Activated CD4-positive, alpha-beta T cell treated with anti-CD3 and anti-CD28 coated beads, Interleukin-2, amount 10 ng/mL, durations not matched to agents 24 days and 14 days (primary cell): ENCODE measurements at regions of chr16 and their contacts with region 1.

Region 1: GRCh38 chr16:1772736-1773584 is at the starts of genes EME2 and MRPS34:
- DNase-seq: peak; percentile 96
- H3K4me3 Mint-ChIP-seq: peak within 1 kb of the TSS; percentile 93
- H3K27ac Mint-ChIP-seq: peak within 1 kb of the TSS; percentile 95
- H3K4me1 Mint-ChIP-seq: peaks cover 10% of the 10 kb centered on the region
- H3K27me3 Mint-ChIP-seq: no peaks in the 10 kb centered on the region
- total RNA-seq, gene EME2: 28.2 and 30.0 TPM in 2 replicates
- total RNA-seq, gene MRPS34: 201 and 207 TPM in 2 replicates

Region 2: GRCh38 chr16:1474796-1475551 is 298.0 kb before region 1 on chr16 and contains the start of gene CLCN7:
- intact Hi-C with region 1: loop called (anchors 1 kb)
- DNase-seq: peak; percentile 97
- H3K4me3 Mint-ChIP-seq: peak within 1 kb of the TSS; percentile 89
- H3K27ac Mint-ChIP-seq: peak within 1 kb of the TSS; percentile 87
- H3K4me1 Mint-ChIP-seq: peaks cover 9% of the 10 kb centered on the region
- H3K27me3 Mint-ChIP-seq: no peaks in the 10 kb centered on the region
- total RNA-seq, gene CLCN7: 56.5 and 58.0 TPM in 2 replicates

Region 3: GRCh38 chr16:1677802-1678496 is 95.0 kb before region 1 on chr16 and contains the start of gene JPT2:
- intact Hi-C with region 1: loop called (anchors 2 kb)
- DNase-seq: peak; percentile 99
- H3K4me3 Mint-ChIP-seq: peak within 1 kb of the TSS; percentile 95
- H3K27ac Mint-ChIP-seq: peak within 1 kb of the TSS; percentile 93
- H3K4me1 Mint-ChIP-seq: peaks cover 34% of the 10 kb centered on the region
- H3K27me3 Mint-ChIP-seq: no peaks in the 10 kb centered on the region
- total RNA-seq, gene JPT2: 119 and 120 TPM in 2 replicates

Region 4: DNA sequence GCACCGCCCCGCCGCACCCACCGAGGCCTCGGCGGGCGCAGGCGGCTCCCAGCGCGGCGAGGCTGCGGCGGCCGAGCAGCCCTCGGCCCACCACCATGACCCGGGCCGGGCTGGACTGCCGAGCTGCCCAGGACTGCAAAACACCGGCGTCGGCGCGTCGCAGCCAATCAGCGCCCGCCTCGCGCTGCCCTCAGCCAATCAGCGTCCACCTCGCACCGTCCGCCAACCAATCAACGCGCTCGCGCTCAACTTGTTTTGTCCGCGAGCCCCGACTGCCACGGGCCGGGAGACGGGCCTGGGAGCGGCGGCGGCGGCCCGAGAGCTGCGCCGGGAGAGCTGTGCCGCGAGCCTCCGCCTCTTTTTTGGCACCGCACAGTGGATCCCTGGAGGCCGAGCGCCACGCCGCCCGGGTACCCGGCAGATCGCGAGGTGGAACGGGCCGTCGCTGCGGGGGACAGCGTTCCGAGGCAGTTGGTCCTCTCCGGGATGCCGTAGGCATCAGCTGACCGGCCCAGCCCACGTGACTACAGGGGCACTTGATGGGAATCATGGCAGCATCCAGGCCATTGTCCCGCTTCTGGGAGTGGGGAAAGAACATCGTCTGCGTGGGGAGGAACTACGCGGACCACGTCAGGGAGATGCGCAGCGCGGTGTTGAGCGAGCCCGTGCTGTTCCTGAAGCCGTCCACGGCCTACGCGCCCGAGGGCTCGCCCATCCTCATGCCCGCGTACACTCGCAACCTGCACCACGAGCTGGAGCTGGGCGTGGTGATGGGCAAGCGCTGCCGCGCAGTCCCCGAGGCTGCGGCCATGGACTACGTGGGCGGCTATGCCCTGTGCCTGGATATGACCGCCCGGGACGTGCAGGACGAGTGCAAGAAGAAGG is 54.0 kb after region 1 on chr16 and contains the starts of genes FAHD1 and HAGH:
- intact Hi-C with region 1: loop called (anchors 2 kb)
- DNase-seq: peak; percentile 98
- H3K4me3 Mint-ChIP-seq: peak within 1 kb of the TSS; percentile 97
- H3K27ac Mint-ChIP-seq: peak within 1 kb of the TSS; percentile 89
- H3K4me1 Mint-ChIP-seq: peaks cover 25% of the 10 kb centered on the region
- H3K27me3 Mint-ChIP-seq: no peaks in the 10 kb centered on the region
- total RNA-seq, gene FAHD1: 20.2 and 21.7 TPM in 2 replicates
- total RNA-seq, gene HAGH: 50.3 and 57.7 TPM in 2 replicates